CD8-positive, alpha-beta T cell (primary cell): ENCODE measurements at regions of chr6 and their contacts with region 1.

Region 1: GRCh38 chr6:34526992-34527728 is 29.0 kb downstream of the SPDEF start:
- DNase-seq: peak; percentile 91 to 99 (median 96)
- ATAC-seq: peak; percentile 98
- H3K4me3 ChIP-seq: peak overlapping the region; percentile 17 to 31
- H3K4me3 Mint-ChIP-seq: peak overlapping the region; percentile 58
- H3K27ac ChIP-seq: peak overlapping the region; percentile 31 to 58
- H3K27ac Mint-ChIP-seq: peak overlapping the region; percentile 80
- H3K4me1 ChIP-seq: peaks cover 7% of the 10 kb centered on the region
- H3K4me1 Mint-ChIP-seq: peaks cover 14% of the 10 kb centered on the region
- H3K27me3 ChIP-seq: no peaks in the 10 kb centered on the region
- H3K27me3 Mint-ChIP-seq: no peaks in the 10 kb centered on the region
- CTCF ChIP-seq: peak; percentile 51

Region 2: DNA sequence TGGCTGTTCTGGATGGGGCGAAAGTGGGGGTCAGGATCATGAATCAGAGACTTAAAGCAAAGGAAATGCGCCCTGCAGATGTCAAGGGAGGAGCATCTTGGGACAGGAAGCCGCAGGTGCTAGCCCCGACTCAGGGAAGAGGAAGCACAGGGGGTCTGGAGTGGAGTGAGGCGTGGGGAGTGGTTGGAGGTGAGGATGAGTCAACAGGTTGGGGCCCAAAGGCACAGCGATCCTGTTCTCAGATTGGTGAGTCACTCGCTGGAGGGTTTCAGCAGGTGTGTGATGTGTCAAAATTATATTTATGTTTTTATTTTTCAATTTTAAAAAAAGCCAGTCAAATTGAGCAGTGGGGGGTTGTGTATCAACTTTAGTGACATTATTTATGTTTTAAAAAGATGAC is 42.3 kb before region 1 on chr6:
- CTCF ChIA-PET with region 1: no interaction called
- POLR2A ChIA-PET with region 1: no interaction called
- intact Hi-C with region 1: loop called in 1 of 2 experiments (anchors 2 kb)
- DNase-seq: peak; percentile 22 to 87 (median 74)
- ATAC-seq: peak; percentile 88
- H3K4me3 ChIP-seq: no peak overlapping the region
- H3K4me3 Mint-ChIP-seq: peak overlapping the region; percentile 75
- H3K27ac ChIP-seq: peak overlapping the region in 1 of 2 experiments; percentile 66
- H3K27ac Mint-ChIP-seq: peak overlapping the region; percentile 90
- H3K4me1 ChIP-seq: peaks cover 25% of the 10 kb centered on the region
- H3K4me1 Mint-ChIP-seq: peaks cover 34% of the 10 kb centered on the region
- H3K27me3 ChIP-seq: no peaks in the 10 kb centered on the region
- H3K27me3 Mint-ChIP-seq: no peaks in the 10 kb centered on the region
- CTCF ChIP-seq: no peak